ENCODE measurements at regions of chr12 and their contacts with region 1.

Region 1: GRCh38 chr12:13864081-13864673 is 117.2 kb downstream of the GRIN2B start:
- DNase-seq: peak; percentile 73
- H3K4me3 Mint-ChIP-seq: no peak overlapping the region
- H3K27ac Mint-ChIP-seq: no peak overlapping the region
- H3K4me1 Mint-ChIP-seq: no peaks in the 10 kb centered on the region
- H3K27me3 Mint-ChIP-seq: peaks cover 72% of the 10 kb centered on the region
- CTCF ChIP-seq: peak; percentile 87

Region 2: DNA sequence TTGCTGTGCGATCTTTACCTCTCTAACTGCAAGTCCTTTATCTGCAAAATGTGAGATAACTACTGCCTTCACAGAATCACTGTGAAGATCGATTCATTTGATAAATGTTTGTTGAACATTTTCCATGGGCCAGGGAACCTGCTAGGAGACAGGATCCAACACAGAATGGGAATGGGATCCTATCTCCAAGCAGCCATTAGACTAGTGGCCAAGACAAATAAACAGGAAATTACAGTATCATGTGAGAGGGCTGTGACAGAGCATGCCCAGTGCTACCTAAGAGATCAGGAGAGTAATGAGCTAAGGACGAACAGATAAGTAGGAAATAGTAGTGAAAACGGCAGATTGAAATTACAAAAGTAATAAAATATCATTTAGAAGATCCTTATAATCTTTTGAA is 11.6 kb after region 1 on chr12:
- CTCF ChIA-PET with region 1: interaction called, 17 read pairs
- POLR2A ChIA-PET with region 1: no interaction called
- intact Hi-C with region 1: no loop called
- DNase-seq: no peak
- H3K4me3 Mint-ChIP-seq: no peak overlapping the region
- H3K27ac Mint-ChIP-seq: no peak overlapping the region
- H3K4me1 Mint-ChIP-seq: no peaks in the 10 kb centered on the region
- H3K27me3 Mint-ChIP-seq: no peaks in the 10 kb centered on the region
- CTCF ChIP-seq: no peak

Region 3: DNA sequence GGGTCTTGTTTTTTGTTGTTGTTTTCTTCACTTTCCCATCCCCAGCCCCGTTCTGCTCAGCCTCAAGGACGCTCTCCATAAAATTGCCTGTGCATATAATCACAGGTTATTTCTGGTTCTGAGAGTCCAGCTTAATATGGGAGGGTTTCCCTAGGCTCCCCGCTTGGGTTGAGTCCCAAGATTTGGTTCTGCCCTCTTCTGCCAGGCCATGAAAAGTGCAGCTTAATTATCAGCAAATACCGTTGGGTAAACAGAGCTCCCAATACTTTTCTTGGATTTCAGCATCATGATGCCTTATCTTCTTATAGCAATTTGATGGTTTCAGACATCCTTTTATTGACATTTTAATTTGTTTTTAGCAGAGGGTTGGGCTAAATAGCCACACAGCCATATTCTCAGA is 41.6 kb after region 1 on chr12:
- CTCF ChIA-PET with region 1: no interaction called
- POLR2A ChIA-PET with region 1: no interaction called
- intact Hi-C with region 1: loop called (anchors 5 kb)
- DNase-seq: peak; percentile 10
- H3K4me3 Mint-ChIP-seq: no peak overlapping the region
- H3K27ac Mint-ChIP-seq: no peak overlapping the region
- H3K4me1 Mint-ChIP-seq: no peaks in the 10 kb centered on the region
- H3K27me3 Mint-ChIP-seq: peaks cover 53% of the 10 kb centered on the region
- CTCF ChIP-seq: no peak

Region 4: GRCh38 chr12:13941258-13942249 is 77.4 kb after region 1 on chr12:
- CTCF ChIA-PET with region 1: interaction called, 19 read pairs
- POLR2A ChIA-PET with region 1: interaction called, 5 read pairs
- intact Hi-C with region 1: loop called (anchors 1 kb)
- DNase-seq: peak; percentile 80
- H3K4me3 Mint-ChIP-seq: no peak overlapping the region
- H3K27ac Mint-ChIP-seq: no peak overlapping the region
- H3K4me1 Mint-ChIP-seq: no peaks in the 10 kb centered on the region
- H3K27me3 Mint-ChIP-seq: no peaks in the 10 kb centered on the region
- CTCF ChIP-seq: peak; percentile 41

Region 5: DNA sequence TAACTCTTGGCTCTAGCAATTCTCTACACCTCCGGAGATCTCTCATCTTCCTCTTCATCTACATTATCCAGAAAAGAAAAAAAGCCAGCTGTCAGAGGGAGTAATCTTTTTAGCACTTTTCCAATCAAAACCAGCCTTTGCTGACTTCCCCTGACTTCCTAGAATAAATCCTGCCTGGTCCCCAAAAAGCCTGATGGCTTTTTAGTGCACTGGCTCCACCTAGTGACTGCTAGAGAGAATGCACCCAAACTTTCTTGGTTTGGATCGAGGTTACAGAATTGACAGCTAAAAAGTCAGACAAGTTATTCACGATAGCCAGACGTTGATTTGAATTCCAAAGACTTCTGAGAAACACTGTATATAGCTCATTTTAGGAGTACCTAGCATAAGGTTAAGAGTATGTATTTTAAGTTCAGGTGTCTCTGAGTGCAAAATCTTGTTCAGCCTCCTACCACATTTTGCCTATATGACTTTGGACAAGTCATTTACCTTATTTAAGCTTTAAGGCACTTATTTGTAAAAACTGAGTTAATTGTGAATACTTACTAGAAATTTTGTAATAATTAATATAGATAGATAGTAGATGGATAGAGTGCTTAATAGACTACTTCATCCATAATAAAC is 302.9 kb after region 1 on chr12:
- CTCF ChIA-PET with region 1: interaction called, 47 read pairs
- POLR2A ChIA-PET with region 1: no interaction called
- intact Hi-C with region 1: loop called (anchors 1 kb)
- DNase-seq: peak; percentile 68
- H3K4me3 Mint-ChIP-seq: no peak overlapping the region
- H3K27ac Mint-ChIP-seq: no peak overlapping the region
- H3K4me1 Mint-ChIP-seq: no peaks in the 10 kb centered on the region
- H3K27me3 Mint-ChIP-seq: peaks cover 9% of the 10 kb centered on the region
- CTCF ChIP-seq: peak; percentile 95

Measured in MCF 10A (cell line).